Sigmoid colon (tissue), 7 donors: ENCODE measurements at regions of chr1 and their contacts with region 1.

Region 1: DNA sequence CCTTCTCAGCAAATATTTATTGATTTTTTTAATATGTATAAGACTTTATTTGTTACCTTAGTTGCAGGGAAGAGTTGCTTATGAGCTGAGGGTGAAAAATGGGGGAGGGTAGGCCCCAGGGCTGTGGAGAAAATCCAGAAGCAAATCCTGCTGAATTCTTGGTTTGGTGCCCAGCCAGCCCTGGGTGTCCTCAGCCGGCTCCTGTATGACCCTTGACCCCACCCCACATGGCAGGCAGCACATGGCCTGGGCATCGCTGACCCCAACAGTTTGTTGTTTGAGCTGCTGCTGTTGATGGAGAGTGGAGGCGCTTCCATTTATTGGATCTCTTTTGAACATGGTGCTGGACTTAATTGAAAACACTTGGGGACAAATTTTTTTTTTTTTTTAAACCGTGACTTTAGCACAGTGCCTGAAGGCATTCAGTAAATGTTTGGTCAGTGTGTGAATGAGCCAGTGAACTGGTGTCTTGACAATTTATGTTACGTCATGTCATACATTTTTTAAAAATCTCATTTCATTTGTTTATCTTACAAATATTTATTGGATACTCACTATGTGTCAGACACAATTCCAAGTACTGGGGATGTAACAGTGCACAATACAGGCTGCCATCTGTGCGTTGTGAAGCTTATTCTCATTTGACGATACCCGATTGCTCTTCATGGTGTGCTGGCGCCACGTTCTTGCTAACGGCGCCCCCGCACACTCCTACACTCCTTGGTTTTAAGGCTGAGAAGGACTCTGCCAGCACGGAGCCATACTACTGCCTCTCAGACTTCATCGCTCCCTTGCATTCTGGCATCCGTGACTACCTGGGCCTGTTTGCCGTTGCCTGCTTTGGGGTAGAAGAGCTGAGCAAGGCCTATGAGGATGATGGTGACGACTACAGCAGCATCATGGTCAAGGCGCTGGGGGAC is 98.8 kb downstream of the MTR start:
- DNase-seq: no peak
- H3K4me3 ChIP-seq: no peak overlapping the region
- H3K27ac ChIP-seq: peak overlapping the region in 3 of 4 donors; percentile 53 to 81 (median 73)
- H3K4me1 ChIP-seq: peaks cover 0 to 79% (median 71%) of the 10 kb centered on the region in 4 donors
- H3K27me3 ChIP-seq: no peaks in the 10 kb centered on the region
- CTCF ChIP-seq: no peak
- EP300 ChIP-seq: peak in 1 of 4 donors; percentile 41
- POLR2A ChIP-seq: no peak

Region 2: GRCh38 chr1:236795035-236795756 is 98.7 kb before region 1 on chr1 and contains the start of gene MTR:
- intact Hi-C with region 1: loop called (anchors 2 kb)
- DNase-seq: peak; percentile 99
- H3K4me3 ChIP-seq: peak within 1 kb of the TSS; percentile 62 to 97 (median 73)
- H3K27ac ChIP-seq: peak within 1 kb of the TSS; percentile 88 to 97 (median 92)
- H3K4me1 ChIP-seq: peaks cover 0 to 34% (median 27%) of the 10 kb centered on the region in 4 donors
- H3K27me3 ChIP-seq: no peaks in the 10 kb centered on the region
- CTCF ChIP-seq: no peak
- EP300 ChIP-seq: no peak
- POLR2A ChIP-seq: peak; percentile 71 to 83
- total RNA-seq, gene MTR: 28.2 to 38.4 (median 30.7) TPM

Region 3: GRCh38 chr1:237012788-237013383 is 119.0 kb after region 1 on chr1:
- intact Hi-C with region 1: loop called (anchors 10 kb)
- DNase-seq: peak; percentile 84
- H3K4me3 ChIP-seq: peak overlapping the region in 1 of 4 donors; percentile 14
- H3K27ac ChIP-seq: peak overlapping the region; percentile 67 to 90 (median 78)
- H3K4me1 ChIP-seq: peaks cover 0 to 27% (median 21%) of the 10 kb centered on the region in 4 donors
- H3K27me3 ChIP-seq: no peaks in the 10 kb centered on the region
- CTCF ChIP-seq: no peak
- EP300 ChIP-seq: peak in 2 of 4 donors; percentile 20 to 29
- POLR2A ChIP-seq: no peak